AG04449 (cell line): ENCODE measurements at regions of chr1 and their contacts with region 1.

Region 1: DNA sequence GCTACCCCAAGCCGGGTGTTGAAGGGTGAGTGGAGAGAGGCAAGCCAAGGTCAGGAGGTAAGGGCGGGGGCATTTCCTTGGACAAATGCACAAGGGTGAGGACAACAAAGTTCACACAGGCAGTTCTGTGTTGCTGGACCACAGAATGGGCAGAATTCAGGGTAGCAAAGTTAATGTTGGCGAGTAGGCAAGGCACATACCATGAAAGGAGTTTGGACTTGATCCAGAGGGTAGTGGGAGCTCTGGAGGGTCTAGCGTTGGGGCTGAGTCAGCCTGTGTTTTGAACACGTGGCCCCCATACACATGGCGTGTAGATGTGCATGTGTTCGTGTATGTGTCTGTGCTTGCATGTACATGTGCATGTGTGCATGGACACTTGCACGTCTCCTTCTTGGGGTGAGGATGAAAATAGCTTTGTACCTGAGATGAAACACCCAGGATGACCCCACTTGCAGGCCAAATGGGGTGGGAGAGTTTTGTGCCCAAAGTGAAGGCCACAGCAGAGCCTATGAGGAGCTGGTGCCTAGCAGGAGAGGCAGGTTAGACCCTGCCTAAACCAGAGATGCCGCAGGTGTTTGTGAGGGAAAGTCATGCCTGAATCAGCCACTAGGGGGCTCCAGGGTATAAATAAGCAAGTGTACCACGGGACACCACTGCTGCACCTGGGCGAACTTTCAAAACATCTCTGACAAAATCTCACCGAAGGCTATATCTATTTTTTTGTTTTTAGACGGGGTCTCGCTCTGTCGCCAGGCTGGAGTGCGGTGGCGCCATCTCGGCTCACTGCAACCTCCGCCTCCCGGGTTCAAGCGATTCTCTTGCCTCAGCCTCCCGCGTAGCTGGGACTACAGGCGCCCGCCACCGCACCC is 21.8 kb downstream of the SLC27A3 start:
- DNase-seq: no peak
- H3K4me3 ChIP-seq: no peak overlapping the region
- CTCF ChIP-seq: peak; percentile 77

Region 2: DNA sequence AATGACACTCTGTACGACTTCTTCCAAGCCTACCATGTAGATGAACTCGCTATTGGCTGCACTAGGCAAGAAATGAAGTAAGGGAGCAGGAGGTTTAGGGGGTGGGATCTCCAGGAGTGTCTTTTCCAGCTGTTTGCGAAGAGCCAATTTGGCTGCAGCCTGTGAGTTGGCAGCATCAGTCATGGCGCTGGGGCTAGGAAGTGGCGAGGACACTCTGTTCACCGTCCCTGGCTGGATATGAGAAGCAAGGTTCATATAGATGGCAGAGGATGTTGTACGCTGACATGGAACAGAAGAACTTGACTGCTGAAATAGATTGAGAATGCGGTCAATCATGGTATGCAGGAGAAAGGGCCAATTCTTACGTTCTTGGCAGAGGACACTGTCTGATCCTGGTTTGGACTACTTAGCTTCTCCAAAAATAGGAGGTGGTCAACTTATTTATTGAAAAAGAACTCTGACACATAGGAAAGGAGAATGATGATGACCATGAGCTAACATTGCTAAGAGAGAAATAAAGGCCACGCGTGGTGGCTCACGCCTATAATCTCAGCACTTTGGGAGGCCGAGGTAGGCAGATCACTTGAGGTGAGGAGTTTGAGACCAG is 19.4 kb after region 1 on chr1:
- CTCF ChIA-PET with region 1: interaction called, 37 read pairs
- POLR2A ChIA-PET with region 1: no interaction called
- DNase-seq: no peak
- H3K4me3 ChIP-seq: no peak overlapping the region
- CTCF ChIP-seq: no peak

Region 3: GRCh38 chr1:153866045-153866850 is 69.2 kb after region 1 on chr1:
- CTCF ChIA-PET with region 1: no interaction called
- POLR2A ChIA-PET with region 1: no interaction called
- DNase-seq: no peak
- H3K4me3 ChIP-seq: no peak overlapping the region
- CTCF ChIP-seq: no peak